Panc1 (cell line): ENCODE measurements at regions of chr10 and their contacts with region 1.

Region 1: DNA sequence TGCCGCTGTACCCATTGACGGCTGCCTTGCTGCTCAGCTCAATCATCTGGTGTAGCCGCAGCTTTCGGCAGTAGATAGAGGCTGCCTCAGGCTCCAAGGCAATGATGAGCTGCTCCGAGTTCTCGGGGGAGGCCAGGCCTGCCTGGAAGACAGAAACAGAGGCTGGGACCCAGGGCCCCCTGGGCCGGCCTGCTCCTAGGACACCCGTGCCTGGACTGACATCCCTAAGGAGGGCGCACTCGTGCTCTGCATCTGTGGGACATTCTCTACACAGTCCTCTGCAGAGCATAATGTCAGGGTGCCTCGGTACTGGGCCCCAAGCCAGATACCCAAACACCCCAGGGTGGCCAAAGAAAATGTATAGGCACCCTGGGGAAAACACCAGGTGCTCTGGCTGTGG is 58.5 kb downstream of the HSPA12A start:
- DNase-seq: no peak
- ATAC-seq: no peak
- H3K4me3 ChIP-seq: no peak overlapping the region
- H3K27ac ChIP-seq: no peak overlapping the region
- H3K4me1 ChIP-seq: peaks cover 3% of the 10 kb centered on the region; the same call in 1 of the 2 replicates
- H3K27me3 ChIP-seq: no peaks in the 10 kb centered on the region
- CTCF ChIP-seq: no peak

Region 2: DNA sequence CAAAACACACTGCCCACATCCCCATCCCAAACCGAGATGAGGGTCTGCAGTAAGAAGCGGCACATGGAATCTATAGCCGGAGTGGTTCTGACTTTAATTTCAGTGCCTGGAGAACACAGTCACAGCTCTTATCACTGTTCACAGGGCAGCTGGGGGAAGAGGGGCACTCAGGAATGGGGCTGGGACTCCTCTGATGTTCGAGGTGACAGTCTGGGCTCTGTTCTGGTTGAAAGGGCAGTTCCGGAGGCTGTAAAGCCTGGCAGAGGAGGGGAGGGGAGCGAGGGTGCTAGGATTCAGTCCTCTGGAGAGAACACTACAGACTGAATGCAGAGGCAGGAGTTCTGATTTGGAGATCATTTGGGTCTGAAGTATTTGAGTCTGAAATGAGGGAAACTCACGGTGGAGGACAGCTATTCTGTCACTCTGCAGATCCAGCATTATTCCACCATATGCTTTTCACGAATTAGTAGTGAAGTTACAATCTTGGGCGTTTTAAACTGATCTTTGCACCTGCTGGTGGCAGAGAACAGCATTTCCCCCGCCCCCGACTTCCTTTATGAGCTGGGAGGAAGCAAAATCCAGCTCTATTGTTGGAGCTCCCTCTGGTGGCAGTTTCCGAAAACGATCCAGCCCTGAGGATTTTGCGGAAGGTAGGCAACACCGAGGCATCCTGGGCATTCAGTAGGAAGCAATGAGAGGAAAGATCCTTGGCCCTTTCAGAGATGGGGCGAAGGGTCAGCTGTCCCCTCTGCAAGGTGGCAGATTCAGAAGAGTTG is 490.8 kb after region 1 on chr10:
- CTCF ChIA-PET with region 1: interaction called, 18 read pairs
- POLR2A ChIA-PET with region 1: no interaction called
- in situ Hi-C with region 1: no loop called
- intact Hi-C with region 1: loop called (anchors 5 kb)
- DNase-seq: peak; percentile 79
- ATAC-seq: peak; percentile 91
- H3K4me3 ChIP-seq: peak overlapping the region; percentile 48 to 75
- H3K27ac ChIP-seq: no peak overlapping the region
- H3K4me1 ChIP-seq: peaks cover 4% of the 10 kb centered on the region; the same call in 1 of the 2 replicates
- H3K27me3 ChIP-seq: peaks cover 33% of the 10 kb centered on the region
- CTCF ChIP-seq: peak; percentile 96

Region 3: GRCh38 chr10:117616179-117616578 is 932.4 kb after region 1 on chr10:
- CTCF ChIA-PET with region 1: no interaction called
- POLR2A ChIA-PET with region 1: no interaction called
- in situ Hi-C with region 1: no loop called
- intact Hi-C with region 1: no loop called
- DNase-seq: no peak
- ATAC-seq: no peak
- H3K4me3 ChIP-seq: no peak overlapping the region
- H3K27ac ChIP-seq: no peak overlapping the region
- H3K4me1 ChIP-seq: no peaks in the 10 kb centered on the region
- H3K27me3 ChIP-seq: peaks cover under 1% of the 10 kb centered on the region; the same call in 1 of the 2 replicates
- CTCF ChIP-seq: no peak